ENCODE measurements at regions of chr11 and their contacts with region 1.

Region 1: DNA sequence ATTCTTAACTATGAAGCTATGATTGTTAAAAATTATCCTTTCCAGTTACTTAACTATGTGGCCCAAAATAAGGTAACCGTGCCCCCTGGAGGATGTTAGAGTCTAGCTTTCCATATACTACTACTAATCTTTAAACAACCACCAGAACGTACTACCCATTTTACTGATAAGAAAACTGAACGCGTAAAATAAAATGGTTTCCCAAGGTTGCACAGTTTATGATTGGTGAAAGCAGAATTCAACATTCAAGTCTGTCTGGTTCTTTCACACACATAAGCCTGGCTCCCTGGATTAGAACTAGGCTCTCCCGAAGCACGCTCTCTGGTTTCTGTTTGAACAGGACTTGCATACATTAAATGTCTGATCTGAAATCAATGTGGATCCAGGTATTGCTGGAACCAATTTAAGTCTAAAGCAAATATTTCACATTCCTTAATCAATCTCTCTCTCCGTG is 437.9 kb upstream of the CCDC90B start:
- DNase-seq: peak; percentile 62
- ATAC-seq: peak; percentile 72
- H3K4me3 ChIP-seq: peak overlapping the region; percentile 63; the same call in 1 of the 2 replicates
- H3K27ac ChIP-seq: no peak overlapping the region
- H3K4me1 ChIP-seq: no peaks in the 10 kb centered on the region
- H3K27me3 ChIP-seq: peaks cover 10% of the 10 kb centered on the region
- CTCF ChIP-seq: peak; percentile 55
- POLR2A ChIP-seq: no peak
- RAD21 ChIP-seq: peak; percentile 66

Region 2: GRCh38 chr11:82601711-82602110 is 1122.3 kb before region 1 on chr11:
- CTCF ChIA-PET with region 1: no interaction called
- POLR2A ChIA-PET with region 1: interaction called, 11 read pairs
- dilution Hi-C with region 1: no loop called
- in situ Hi-C with region 1: no loop called
- intact Hi-C with region 1: no loop called
- DNase-seq: no peak
- ATAC-seq: no peak
- H3K4me3 ChIP-seq: no peak overlapping the region
- H3K27ac ChIP-seq: no peak overlapping the region
- H3K4me1 ChIP-seq: no peaks in the 10 kb centered on the region
- H3K27me3 ChIP-seq: no peaks in the 10 kb centered on the region
- CTCF ChIP-seq: no peak
- POLR2A ChIP-seq: no peak
- RAD21 ChIP-seq: no peak

Region 3: GRCh38 chr11:82906244-82906654 is 817.8 kb before region 1 on chr11:
- CTCF ChIA-PET with region 1: no interaction called
- POLR2A ChIA-PET with region 1: no interaction called
- dilution Hi-C with region 1: no loop called
- in situ Hi-C with region 1: no loop called
- intact Hi-C with region 1: loop called (anchors 2 kb)
- DNase-seq: peak; percentile 43
- ATAC-seq: no peak
- H3K4me3 ChIP-seq: no peak overlapping the region
- H3K27ac ChIP-seq: no peak overlapping the region
- H3K4me1 ChIP-seq: no peaks in the 10 kb centered on the region
- H3K27me3 ChIP-seq: no peaks in the 10 kb centered on the region
- CTCF ChIP-seq: peak; percentile 59
- POLR2A ChIP-seq: no peak
- RAD21 ChIP-seq: peak; percentile 68

Region 4: DNA sequence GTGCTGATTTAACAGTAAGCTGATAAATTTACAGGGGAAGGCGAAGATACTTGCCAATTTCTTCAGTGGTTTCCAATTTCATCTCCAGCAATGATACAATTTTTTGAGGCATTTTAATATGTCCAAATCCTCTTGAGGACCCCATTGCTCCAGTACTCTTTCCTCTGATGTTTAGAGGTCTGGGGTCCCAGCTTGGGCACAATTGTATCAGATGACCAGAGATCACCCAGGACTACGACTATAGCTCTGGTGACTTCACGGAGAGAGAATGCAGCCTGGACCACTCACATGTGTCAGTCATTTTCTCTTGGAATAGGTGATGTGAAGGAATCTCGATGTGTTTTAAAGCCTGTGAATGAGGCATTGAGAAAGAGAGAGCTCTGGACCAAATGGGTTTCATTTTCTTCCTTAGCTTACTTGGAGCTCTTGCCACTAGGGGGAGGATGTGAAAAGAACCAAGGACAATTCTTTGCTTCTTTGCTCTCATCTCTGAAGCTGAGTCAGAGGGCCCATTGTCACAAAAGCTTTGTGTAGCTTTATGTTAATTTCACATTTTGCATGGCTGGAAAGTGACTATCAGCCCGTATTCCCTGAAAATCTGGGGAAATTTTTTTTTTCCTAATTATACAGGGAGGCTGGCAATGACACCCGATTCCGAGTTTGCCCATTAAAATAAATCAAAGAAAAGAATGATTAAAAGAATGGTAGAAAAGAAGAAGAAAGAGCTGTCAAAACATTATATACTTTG is 431.2 kb before region 1 on chr11:
- CTCF ChIA-PET with region 1: interaction called, 10 read pairs
- POLR2A ChIA-PET with region 1: no interaction called
- dilution Hi-C with region 1: no loop called
- in situ Hi-C with region 1: no loop called
- intact Hi-C with region 1: loop called (anchors 1 kb)
- DNase-seq: peak; percentile 73
- ATAC-seq: peak; percentile 94
- H3K4me3 ChIP-seq: peak overlapping the region; percentile 17; the same call in 1 of the 2 replicates
- H3K27ac ChIP-seq: no peak overlapping the region
- H3K4me1 ChIP-seq: no peaks in the 10 kb centered on the region
- H3K27me3 ChIP-seq: peaks cover 4% of the 10 kb centered on the region; the same call in 1 of the 2 replicates
- CTCF ChIP-seq: peak; percentile 77
- POLR2A ChIP-seq: no peak
- RAD21 ChIP-seq: peak; percentile 67

Region 5: GRCh38 chr11:83521647-83522596 is 202.1 kb before region 1 on chr11:
- CTCF ChIA-PET with region 1: interaction called, 3 read pairs
- POLR2A ChIA-PET with region 1: no interaction called
- dilution Hi-C with region 1: no loop called
- in situ Hi-C with region 1: no loop called
- intact Hi-C with region 1: loop called (anchors 1 kb)
- DNase-seq: peak; percentile 31
- ATAC-seq: peak; percentile 70
- H3K4me3 ChIP-seq: no peak overlapping the region
- H3K27ac ChIP-seq: no peak overlapping the region
- H3K4me1 ChIP-seq: no peaks in the 10 kb centered on the region
- H3K27me3 ChIP-seq: peaks cover 5% of the 10 kb centered on the region
- CTCF ChIP-seq: peak; percentile 50
- POLR2A ChIP-seq: no peak
- RAD21 ChIP-seq: peak; percentile 65

Region 6: DNA sequence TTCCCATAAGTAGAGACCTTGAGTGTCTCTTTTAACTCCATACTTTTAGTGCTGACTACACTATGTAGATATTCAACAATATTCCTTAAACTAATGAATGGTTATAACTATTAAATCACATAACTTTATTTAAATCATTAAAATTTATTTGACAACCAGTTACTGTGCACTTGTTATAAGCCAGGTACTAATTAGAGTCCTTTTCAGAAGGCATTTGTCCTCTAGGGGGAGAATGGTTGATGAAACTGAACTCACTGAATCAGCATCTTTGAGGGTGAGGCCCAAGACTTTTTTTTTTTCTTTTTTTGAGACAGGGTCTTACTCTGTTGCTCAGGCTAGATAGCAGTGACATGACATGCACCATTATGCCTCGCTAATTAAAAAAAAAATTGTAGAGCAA is 77.7 kb after region 1 on chr11:
- CTCF ChIA-PET with region 1: no interaction called
- POLR2A ChIA-PET with region 1: no interaction called
- dilution Hi-C with region 1: no loop called
- in situ Hi-C with region 1: no loop called
- intact Hi-C with region 1: no loop called
- DNase-seq: no peak
- ATAC-seq: no peak
- H3K4me3 ChIP-seq: no peak overlapping the region
- H3K27ac ChIP-seq: no peak overlapping the region
- H3K4me1 ChIP-seq: no peaks in the 10 kb centered on the region
- H3K27me3 ChIP-seq: peaks cover 2% of the 10 kb centered on the region
- CTCF ChIP-seq: no peak
- POLR2A ChIP-seq: no peak
- RAD21 ChIP-seq: no peak